Posterior vena cava (tissue), 2 donors: ENCODE measurements at regions of chr2 and their contacts with region 1.

Region 1: GRCh38 chr2:232668805-232669444 is 28.2 kb upstream of the GIGYF2 start:
- DNase-seq: no peak

Region 2: GRCh38 chr2:232444409-232445148 is 224.3 kb before region 1 on chr2:
- intact Hi-C with region 1: loop called in 1 of 2 experiments (anchors 5 kb)
- DNase-seq: no peak

Region 3: DNA sequence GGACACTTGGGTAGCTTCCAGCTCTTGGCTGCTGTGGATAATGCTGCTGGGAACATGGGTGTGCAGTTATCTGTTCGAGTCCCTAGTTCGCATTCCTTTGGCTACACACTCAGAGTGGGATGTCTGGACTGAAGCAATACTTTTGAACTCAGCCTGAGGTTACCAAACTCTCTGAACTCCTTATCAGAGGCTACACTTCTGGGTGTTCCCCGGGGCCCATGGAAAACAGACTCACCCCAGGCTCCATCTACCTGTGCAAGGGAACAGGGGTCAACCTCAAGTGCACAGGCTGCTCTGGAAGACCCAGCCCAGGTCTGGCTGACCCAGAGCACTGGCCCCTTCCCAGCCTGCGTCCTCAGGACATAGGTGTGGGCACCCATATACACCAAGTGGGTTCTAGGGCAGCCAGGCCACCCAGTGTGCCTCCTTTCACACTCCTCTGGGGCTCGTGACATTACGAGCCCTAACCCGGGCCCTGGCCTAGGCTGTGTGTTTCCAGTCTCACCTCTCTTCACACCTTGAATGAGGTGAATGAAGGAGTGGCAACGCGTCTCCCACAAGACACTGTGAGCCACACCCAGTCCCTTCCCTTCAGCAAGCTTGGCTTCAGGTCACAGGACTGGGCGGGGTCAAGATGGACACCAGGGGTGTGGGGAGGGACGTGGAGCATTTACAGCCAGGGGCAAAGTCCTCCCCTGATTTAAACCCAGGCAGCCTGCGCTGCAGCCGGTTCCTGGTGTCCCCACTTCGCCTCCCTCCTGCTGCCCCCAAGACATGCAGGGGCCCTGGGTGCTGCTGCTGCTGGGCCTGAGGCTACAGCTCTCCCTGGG is 213.3 kb before region 1 on chr2 and contains the start of gene ALPI:
- intact Hi-C with region 1: no loop called
- DNase-seq: peak; percentile 62
- total RNA-seq, gene ALPI: not detected

Region 4: GRCh38 chr2:232600053-232600773 is 68.7 kb before region 1 on chr2:
- intact Hi-C with region 1: loop called in 1 of 2 experiments (anchors 10 kb)
- DNase-seq: no peak

Region 5: DNA sequence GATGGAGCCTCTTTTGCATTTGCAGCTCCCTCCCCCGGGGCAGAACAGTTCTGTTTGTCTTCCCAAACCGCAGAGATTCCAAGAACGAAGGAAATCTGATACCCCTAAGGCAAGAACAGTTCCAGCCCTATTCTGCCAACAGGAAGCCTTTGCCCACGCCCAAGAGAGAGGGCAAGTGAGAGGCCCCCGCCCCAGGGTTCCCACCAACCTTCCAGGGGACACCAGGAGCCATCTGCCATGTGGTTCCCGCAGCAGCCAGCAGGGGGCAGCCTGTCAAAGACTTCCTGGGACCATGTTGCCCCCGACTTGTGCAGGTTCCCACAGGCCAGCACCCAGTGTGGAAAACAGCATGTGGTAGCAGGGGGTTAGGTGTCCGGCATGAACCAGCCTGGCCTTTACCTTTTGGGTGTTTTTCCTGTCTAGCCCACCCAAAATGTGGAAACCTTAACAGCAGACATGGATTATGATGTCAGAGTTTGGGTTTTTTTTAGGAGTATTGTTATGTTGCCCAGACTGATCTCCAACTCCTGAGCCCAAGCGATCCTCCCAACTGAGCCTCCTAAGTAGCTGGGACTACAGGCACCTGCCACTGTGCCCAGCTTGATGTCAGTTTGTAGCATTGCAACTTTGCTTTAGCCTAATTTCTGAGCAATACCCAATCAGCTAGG is 57.2 kb before region 1 on chr2:
- intact Hi-C with region 1: loop called (anchors 10 kb)
- DNase-seq: peak; percentile 87